OCI-LY7 (cell line): ENCODE measurements at regions of chr5 and their contacts with region 1.

Region 1: DNA sequence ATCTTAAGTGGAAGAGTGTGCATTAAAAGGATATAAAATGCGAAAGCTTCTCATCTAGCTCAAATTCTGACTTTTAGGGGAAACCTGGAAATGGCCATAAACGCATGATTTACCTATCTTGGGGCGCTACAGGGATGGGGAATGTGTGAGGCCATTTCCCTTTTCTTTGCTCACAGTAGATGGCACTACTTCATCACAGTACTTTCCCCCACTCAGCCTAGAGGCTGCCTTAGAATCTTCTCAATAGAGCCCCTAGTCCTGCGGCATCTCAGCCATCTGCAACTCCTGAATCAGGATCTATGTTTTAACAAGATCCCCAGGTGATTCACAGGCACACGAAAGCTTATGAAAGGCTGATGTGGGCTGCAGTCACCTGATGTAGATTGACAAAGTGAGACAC is 110.8 kb downstream of the LHFPL2 start:
- DNase-seq: peak; percentile 65
- H3K4me3 ChIP-seq: no peak overlapping the region
- H3K27ac ChIP-seq: no peak overlapping the region
- H3K4me1 ChIP-seq: peaks cover 13% of the 10 kb centered on the region
- CTCF ChIP-seq: peak; percentile 77

Region 2: DNA sequence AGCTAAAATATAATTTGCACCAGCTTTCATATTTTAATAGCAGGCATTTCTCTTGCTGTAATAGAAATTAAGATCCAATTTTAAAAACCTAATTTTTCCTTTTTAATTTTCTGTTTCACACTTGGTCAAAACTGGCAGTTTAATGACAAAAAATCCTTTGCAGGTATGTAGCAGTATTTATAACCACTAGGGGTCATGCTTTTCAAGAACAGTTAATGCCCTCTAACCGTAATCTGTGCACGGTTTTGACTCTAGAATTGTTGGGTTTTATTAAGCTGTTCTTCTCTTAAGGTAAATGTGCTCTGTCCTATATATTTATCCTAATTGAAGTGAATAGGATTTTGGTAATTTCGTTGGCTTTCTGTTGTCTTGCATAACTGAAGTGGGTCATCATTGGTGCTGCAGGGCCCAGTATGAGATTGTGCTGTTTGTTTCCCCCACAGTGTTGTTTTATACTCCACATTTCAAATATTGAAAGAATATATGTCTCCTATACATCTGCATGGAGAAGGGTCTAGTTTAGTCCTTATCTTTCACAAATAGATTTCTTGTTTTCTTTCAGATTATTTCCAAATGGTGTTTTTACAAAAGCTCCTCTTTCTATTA is 70.0 kb before region 1 on chr5:
- CTCF ChIA-PET with region 1: no interaction called
- POLR2A ChIA-PET with region 1: no interaction called
- intact Hi-C with region 1: loop called (anchors 5 kb)
- DNase-seq: peak; percentile 70
- H3K4me3 ChIP-seq: no peak overlapping the region
- H3K27ac ChIP-seq: no peak overlapping the region
- H3K4me1 ChIP-seq: no peaks in the 10 kb centered on the region
- CTCF ChIP-seq: peak; percentile 96

Region 3: DNA sequence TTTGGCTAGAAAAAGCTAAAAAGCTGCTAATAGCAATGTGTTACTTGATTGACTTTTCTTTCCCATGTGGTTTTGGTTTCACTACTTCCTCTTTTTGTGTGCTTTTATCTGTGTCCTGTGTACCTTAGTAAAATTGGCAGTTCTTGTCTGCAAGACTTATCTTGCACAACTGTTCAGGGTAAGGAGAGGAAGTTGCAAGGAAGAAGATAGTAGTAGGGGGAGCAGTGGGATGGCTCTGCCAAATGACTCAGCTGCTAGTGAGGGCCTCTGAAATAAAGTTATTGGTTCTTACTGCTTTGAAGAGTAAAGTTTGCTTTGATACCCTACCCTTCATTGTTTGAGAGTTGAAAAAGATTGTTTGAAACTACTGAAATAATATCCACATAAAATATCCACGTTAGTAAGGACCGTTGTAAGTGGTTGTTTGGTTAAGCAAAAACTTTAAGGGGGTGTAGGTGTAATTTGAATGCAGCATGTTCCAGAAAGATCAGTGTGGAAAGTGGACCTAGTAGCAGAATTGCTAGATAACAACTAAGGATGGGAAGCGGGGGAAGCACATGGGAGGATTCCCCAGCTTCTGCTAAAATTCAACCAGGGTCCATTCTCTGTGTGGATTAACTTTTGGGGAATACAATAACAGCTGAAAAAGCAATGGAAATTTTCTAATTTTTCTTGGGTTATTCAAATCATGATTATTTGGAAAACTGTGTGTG is 53.9 kb before region 1 on chr5:
- CTCF ChIA-PET with region 1: no interaction called
- POLR2A ChIA-PET with region 1: interaction called, 3 read pairs
- intact Hi-C with region 1: loop called (anchors 5 kb)
- DNase-seq: peak; percentile 91
- H3K4me3 ChIP-seq: peak overlapping the region; percentile 42
- H3K27ac ChIP-seq: peak overlapping the region; percentile 82
- H3K4me1 ChIP-seq: peaks cover 36% of the 10 kb centered on the region
- CTCF ChIP-seq: peak; percentile 32; the same call in 1 of the 2 replicates

Region 4: DNA sequence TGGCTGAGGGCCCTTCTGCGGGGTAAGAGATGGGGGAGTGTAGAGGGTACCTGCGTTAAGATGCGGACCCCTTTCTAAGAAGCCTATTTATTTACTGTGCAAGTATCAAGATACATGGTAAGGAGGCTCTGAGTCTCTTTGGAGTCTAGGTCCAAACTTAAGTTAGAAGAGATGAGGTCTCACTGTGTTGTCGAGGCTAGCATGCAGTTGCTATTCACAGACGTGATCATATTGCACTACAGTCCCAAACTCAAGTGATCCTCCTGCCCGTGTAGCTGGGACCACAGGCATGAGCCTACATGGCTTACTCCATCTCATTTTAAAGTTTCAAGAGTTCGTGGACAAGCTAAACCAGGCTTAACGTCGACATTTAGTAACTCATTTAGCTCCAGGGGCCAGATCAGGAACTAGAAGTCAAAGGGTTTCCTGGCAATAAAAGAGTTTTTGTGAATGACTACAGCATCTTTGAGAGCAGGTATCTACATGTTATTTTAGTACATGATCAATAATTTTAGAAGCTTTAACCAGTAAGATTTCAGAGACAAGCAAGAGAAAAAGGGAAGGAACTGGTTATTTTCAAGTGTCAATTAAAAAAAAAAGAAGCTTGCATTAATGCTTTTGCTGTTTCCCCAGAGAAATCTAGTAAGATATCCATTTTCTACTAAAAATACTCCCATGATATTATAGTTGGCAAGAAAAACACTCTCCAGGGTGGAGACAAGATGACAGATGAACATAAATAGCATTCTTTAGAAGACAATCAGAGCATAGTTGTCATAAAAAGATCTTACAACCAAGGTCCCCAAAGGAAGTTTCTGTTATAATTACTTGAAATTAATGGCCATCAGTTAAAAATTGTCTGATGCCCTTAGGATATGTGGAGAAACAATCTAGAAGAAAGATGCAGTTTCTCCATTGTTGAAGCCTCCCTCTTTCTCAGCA is 36.1 kb before region 1 on chr5:
- CTCF ChIA-PET with region 1: no interaction called
- POLR2A ChIA-PET with region 1: no interaction called
- intact Hi-C with region 1: no loop called
- DNase-seq: no peak
- H3K4me3 ChIP-seq: no peak overlapping the region
- H3K27ac ChIP-seq: no peak overlapping the region
- H3K4me1 ChIP-seq: peaks cover 57% of the 10 kb centered on the region
- CTCF ChIP-seq: no peak

Region 5: DNA sequence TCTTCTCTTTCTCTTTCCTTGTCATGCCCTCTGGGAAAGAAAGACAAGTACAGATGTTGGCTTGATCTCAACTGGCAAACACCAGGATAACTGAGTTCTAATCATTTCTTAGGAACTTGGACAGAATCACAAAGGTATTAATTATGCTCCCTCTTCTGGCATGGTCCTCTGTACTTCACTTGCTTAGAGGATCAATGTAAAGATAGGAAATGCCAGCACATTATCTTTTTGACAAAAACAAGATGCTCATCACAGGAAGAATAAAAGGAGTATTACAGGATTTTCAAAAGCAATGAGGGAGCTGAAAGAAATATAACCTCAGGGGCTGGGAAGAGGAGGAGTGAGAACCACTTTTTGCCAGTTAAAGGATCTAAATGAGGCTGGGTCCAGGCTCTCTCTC is 40.2 kb after region 1 on chr5:
- CTCF ChIA-PET with region 1: no interaction called
- POLR2A ChIA-PET with region 1: no interaction called
- intact Hi-C with region 1: no loop called
- DNase-seq: no peak
- H3K4me3 ChIP-seq: no peak overlapping the region
- H3K27ac ChIP-seq: no peak overlapping the region
- H3K4me1 ChIP-seq: peaks cover 21% of the 10 kb centered on the region
- CTCF ChIP-seq: no peak

Region 6: DNA sequence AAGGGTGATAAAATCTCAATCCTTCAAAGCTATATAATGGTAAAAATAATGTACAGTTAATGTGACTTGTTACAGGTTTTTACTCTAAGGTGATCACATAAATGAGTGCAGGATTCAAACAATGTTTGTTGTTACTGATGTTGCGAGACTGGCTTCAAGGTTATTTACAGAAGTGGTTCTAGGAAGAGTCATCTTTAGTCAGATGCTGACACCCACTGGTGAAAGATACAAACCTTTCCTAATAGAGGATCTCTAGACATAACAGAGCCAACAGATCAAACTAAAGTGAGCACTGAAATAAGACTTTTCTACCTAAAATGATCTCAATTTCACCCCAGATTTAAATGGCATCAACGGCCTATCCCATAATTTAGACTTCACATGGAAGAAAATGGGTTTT is 427.1 kb after region 1 on chr5:
- CTCF ChIA-PET with region 1: interaction called, 3 read pairs
- POLR2A ChIA-PET with region 1: no interaction called
- intact Hi-C with region 1: loop called (anchors 1 kb)
- DNase-seq: peak; percentile 76
- H3K4me3 ChIP-seq: no peak overlapping the region
- H3K27ac ChIP-seq: no peak overlapping the region
- H3K4me1 ChIP-seq: no peaks in the 10 kb centered on the region
- CTCF ChIP-seq: peak; percentile 84

Region 7: DNA sequence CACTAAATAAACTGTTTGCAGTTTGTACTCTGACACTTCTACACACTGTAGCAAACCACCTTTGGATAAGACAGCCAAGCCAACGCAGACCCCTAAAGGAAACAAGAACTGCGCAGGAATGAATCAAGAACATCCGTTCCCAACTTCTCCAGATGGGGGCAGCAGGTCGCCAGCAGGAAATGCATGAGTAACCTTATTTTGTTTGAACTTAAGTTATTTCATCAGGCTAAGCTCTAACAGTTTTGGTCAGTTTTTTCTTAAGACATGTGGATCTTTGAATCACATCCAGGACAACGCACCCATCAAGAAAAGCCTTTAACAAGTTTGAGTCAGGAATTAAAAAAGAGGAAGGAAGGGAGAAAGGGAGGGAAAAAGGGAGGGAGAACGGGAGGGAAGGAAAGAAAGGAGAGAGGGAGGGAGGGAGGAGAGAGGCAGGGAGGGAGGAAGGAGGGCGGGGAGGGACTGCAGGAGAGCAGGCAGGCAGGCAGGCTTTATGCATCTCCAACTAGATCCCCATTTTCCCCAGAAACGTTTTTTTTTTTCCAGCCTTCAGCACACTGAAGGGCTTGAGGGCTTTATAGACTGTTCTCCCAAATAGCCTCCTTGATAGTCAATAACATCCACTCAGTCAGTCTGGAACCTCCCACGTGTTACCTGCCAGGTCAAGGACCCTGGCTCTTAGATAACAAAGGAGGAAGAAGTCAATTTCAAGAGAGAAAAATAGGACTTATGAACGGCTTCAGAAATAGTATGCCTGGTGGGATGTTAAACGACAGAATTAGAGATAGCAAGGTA is 596.0 kb after region 1 on chr5:
- CTCF ChIA-PET with region 1: no interaction called
- POLR2A ChIA-PET with region 1: interaction called, 3 read pairs
- intact Hi-C with region 1: loop called (anchors 5 kb)
- DNase-seq: peak; percentile 81
- H3K4me3 ChIP-seq: peak overlapping the region; percentile 6
- H3K27ac ChIP-seq: no peak overlapping the region
- H3K4me1 ChIP-seq: peaks cover 10% of the 10 kb centered on the region
- CTCF ChIP-seq: peak; percentile 81